A673 (cell line): ENCODE measurements at regions of chr10 and their contacts with region 1.

Region 1: DNA sequence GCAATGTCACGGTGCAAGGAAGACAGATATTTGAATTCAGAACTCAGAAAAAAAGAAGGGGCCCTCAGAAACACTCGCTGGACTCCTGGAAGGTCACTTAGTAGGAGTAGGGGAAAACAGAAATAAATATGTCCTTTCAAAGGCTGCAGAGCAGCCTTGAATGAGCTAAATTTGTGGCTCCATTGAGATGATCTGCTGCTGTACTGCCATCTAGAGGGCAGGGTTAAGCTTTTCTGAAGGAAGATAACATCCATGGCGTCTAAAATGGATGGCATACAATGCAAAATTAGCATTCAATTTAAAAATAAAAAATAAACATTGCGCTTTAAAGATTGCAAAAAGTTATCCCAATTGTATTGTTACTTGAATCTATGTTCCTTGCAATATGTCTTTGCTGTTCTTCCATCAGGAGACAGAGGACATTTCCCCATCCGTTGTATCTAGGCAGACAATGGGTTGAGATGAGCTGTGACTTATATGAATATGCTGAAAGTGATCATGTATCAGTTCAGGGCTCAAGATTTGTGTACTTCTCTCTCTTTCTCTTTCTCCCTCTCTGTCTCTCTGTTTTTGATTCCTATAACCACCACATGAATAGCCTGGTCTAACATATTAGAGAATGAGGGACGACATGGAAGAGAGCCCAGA is 642.2 kb downstream of the SH2D4B start:
- DNase-seq: peak; percentile 57
- H3K4me3 ChIP-seq: no peak overlapping the region
- H3K27ac ChIP-seq: no peak overlapping the region
- H3K4me1 ChIP-seq: no peaks in the 10 kb centered on the region
- H3K27me3 ChIP-seq: no peaks in the 10 kb centered on the region
- CTCF ChIP-seq: peak; percentile 62

Region 2: DNA sequence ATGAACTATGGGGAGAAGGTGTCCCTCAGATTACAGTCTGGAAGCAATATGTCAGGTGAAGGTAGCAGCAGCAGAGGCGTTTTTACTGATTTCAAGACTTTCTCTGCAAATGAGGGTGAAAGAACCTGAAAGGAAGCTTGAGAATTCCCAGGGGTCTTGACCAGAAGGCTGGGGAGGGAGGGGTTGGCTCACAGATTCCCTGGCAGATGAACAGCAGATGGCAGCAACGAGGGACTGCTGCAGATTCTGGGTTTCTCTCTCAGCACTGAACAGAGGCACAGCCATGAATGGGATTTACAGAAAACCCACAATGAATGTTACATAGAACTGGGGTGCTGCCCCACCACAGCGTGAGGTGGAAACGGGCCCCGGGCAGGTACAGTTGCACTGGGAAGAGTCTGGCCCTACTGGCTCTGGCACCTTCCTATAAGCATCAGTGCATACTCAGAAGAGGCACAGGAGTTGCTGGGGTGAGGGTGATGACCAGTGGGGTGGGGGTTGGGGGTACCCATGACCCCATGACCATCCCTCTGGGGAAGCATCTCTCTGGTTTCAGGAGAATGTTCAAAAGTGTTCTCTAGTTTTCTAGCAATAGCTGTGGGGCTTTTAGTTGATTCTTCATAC is 324.5 kb before region 1 on chr10:
- CTCF ChIA-PET with region 1: no interaction called
- POLR2A ChIA-PET with region 1: no interaction called
- intact Hi-C with region 1: loop called (anchors 10 kb)
- DNase-seq: peak; percentile 42
- H3K4me3 ChIP-seq: no peak overlapping the region
- H3K27ac ChIP-seq: no peak overlapping the region
- H3K4me1 ChIP-seq: no peaks in the 10 kb centered on the region
- H3K27me3 ChIP-seq: no peaks in the 10 kb centered on the region
- CTCF ChIP-seq: peak; percentile 61

Region 3: GRCh38 chr10:81534991-81535390 is 355.1 kb after region 1 on chr10:
- CTCF ChIA-PET with region 1: no interaction called
- POLR2A ChIA-PET with region 1: no interaction called
- intact Hi-C with region 1: no loop called
- DNase-seq: no peak
- H3K4me3 ChIP-seq: no peak overlapping the region
- H3K27ac ChIP-seq: no peak overlapping the region
- H3K4me1 ChIP-seq: no peaks in the 10 kb centered on the region
- H3K27me3 ChIP-seq: no peaks in the 10 kb centered on the region
- CTCF ChIP-seq: no peak